PC-9 (cell line): ENCODE measurements at regions of chr7 and their contacts with region 1.

Region 1: GRCh38 chr7:44858161-44858560 is 10.3 kb upstream of the H2AZ2 start:
- DNase-seq: no peak
- H3K4me3 ChIP-seq: no peak overlapping the region
- H3K27ac ChIP-seq: no peak overlapping the region
- H3K4me1 ChIP-seq: peaks cover 11% of the 10 kb centered on the region
- H3K27me3 ChIP-seq: no peaks in the 10 kb centered on the region
- CTCF ChIP-seq: peak; percentile 41; the same call in 1 of the 2 replicates

Region 2: DNA sequence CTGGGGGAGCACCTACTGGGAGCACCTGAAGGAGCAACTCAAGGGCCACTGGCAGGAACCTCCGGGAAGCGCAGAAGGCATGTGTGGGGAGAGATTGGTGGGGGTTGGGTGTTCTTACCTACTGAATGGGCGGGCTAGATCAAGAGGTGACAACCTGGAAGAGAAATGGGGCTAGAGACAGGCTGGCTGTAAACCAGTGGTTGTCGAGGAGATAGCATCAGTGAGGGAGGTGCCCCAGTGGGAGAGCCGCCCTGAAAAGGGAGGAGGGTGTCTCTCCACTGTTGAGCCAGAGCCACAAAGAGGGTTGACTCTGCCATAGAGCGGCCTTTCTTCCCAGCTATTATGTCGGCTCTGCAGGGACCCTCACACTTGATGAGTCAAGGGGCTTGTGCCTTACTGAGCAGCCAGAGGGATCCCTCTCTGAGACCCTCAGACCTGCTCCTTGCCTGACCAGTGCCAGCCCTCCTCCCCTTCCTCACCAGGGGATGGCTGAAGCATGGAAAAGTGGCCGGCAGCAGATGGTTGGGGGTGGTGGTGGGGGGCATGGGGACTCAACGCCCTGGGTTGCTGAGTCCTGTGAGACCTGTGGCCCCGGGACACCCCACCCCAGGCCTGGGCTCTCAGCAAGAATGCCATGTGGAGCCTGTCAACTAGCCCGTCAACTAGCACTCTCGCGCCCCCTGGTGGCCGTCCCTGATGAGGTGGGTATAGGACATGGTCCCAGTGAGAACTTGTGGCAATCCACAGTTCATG is 63.6 kb after region 1 on chr7:
- CTCF ChIA-PET with region 1: no interaction called
- POLR2A ChIA-PET with region 1: no interaction called
- intact Hi-C with region 1: loop called (anchors 1 kb)
- DNase-seq: peak; percentile 61 to 82
- H3K4me3 ChIP-seq: no peak overlapping the region
- H3K27ac ChIP-seq: no peak overlapping the region
- H3K4me1 ChIP-seq: no peaks in the 10 kb centered on the region
- H3K27me3 ChIP-seq: no peaks in the 10 kb centered on the region
- CTCF ChIP-seq: peak; percentile 99

Region 3: DNA sequence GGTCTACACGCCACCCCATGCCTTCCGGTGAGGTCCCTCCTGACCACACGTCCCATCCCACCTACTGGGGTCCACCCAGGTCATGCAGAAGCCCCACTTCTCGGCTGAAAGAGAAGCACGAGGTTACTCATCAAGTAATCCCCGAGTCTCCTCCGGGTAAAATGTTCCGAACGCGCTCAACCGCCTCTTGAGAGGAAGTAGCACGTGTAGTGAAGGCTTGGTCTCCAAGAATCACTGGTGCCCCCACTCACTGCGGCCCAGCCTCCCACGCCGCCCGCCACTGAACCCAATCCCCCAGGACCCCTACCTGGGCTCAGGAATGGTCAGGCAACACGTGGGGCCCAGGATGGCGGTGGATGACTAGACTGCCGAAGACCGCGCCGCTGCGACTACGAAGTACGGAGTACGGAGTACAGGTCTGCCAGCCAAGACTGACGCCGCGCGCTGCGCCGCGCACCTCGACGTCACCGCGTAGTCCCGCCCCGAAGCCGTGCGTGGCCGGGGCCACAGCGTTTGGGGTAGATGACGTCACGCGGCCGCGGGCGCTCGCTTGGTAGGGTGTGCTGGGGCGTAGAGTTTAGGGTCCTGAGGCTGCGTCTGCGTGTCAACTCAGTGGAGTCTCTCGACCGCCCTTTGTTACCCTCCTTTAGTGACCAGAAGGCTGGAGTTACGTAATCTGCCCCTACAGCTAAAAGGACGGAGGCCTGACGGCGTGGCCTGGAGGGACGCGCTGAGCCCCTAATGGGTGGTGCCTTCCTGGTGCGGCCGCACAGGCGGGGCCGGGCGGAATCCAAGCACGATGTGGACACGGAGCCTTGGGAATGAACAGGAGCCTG is 128.3 kb after region 1 on chr7:
- CTCF ChIA-PET with region 1: no interaction called
- POLR2A ChIA-PET with region 1: no interaction called
- intact Hi-C with region 1: loop called (anchors 10 kb)
- DNase-seq: peak; percentile 92 to 98
- H3K4me3 ChIP-seq: peak overlapping the region; percentile 95
- H3K27ac ChIP-seq: peak overlapping the region; percentile 87
- H3K4me1 ChIP-seq: peaks cover 25% of the 10 kb centered on the region
- H3K27me3 ChIP-seq: no peaks in the 10 kb centered on the region
- CTCF ChIP-seq: no peak; the same call in 1 of the 2 replicates

Region 4: DNA sequence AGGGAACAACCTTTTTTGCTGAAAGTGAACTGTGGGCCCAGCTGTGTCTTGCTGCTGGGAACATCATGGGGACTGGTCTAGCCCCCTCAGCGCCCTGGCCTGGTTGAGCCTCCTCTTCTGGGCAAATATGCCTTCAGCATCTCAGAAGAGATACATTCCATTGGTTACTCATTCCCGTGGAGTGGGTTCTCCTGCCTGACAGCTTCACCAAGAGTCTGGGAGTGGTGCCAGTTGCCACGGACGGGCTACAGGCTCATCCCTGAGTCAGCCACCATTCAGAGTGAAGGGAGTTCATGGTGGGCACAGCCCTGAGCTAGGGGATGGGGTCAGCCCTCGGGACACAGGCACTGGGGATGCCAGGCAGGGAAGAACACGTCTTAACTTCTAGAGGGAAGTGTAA is 381.3 kb after region 1 on chr7:
- CTCF ChIA-PET with region 1: no interaction called
- POLR2A ChIA-PET with region 1: interaction called, 11 read pairs
- intact Hi-C with region 1: no loop called
- DNase-seq: peak in 1 of 2 experiments; percentile 33
- H3K4me3 ChIP-seq: no peak overlapping the region
- H3K27ac ChIP-seq: no peak overlapping the region
- H3K4me1 ChIP-seq: no peaks in the 10 kb centered on the region
- H3K27me3 ChIP-seq: peaks cover 92% of the 10 kb centered on the region
- CTCF ChIP-seq: no peak